B cell (primary cell): ENCODE measurements at regions of chr17 and their contacts with region 1.

Region 1: DNA sequence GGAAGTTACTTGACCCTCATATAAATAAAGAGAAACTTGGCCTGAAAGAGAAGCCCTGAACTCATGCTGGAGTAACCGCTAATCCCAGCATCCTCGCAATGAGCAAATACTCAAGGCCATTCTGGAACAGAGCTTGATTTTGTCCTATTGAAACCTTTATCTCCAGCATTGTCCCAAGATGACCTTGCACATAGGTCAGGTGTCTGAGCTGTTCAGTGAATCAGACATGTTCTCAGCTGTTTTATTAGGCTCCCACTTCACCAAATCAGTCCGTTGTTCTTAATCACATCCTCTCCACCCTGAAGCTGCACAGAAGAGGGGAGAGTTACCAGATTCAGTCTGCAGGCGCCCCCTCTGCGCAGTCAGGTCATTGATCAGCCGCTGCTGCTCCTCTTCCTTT is 9.1 kb upstream of the MYH1 start:
- DNase-seq: no peak
- ATAC-seq: no peak
- H3K4me3 ChIP-seq: no peak overlapping the region
- H3K4me3 Mint-ChIP-seq: no peak overlapping the region
- H3K27ac ChIP-seq: no peak overlapping the region
- H3K27ac Mint-ChIP-seq: no peak overlapping the region
- H3K4me1 ChIP-seq: no peaks in the 10 kb centered on the region
- H3K4me1 Mint-ChIP-seq: no peaks in the 10 kb centered on the region
- H3K27me3 ChIP-seq: peaks cover 0 to 3% (median 0%) of the 10 kb centered on the region in 4 experiments
- H3K27me3 Mint-ChIP-seq: peaks cover 9% of the 10 kb centered on the region
- CTCF ChIP-seq: no peak

Region 2: DNA sequence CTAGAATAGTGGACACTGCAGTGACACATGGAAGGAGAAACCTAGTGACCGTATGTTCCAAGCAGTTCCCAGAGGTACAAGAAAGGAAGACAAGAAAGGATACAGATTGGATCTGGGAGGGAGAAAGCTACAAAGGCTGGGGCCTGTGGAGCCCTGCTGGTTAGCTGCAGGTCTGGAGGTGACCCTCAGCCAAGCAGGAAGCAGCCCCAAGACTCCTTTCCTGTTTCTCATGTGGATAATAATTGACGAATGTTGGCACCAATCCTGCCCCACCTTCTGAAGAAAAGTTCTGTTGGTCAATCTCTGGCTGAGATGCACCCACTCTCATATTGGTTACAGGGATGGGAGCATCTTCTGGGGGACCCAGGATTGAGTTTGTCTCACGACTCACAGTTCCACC is 813.4 kb after region 1 on chr17:
- CTCF ChIA-PET with region 1: no interaction called
- POLR2A ChIA-PET with region 1: no interaction called
- intact Hi-C with region 1: loop called (anchors 10 kb)
- DNase-seq: no peak
- ATAC-seq: no peak
- H3K4me3 ChIP-seq: no peak overlapping the region
- H3K4me3 Mint-ChIP-seq: no peak overlapping the region
- H3K27ac ChIP-seq: no peak overlapping the region
- H3K27ac Mint-ChIP-seq: no peak overlapping the region
- H3K4me1 ChIP-seq: no peaks in the 10 kb centered on the region
- H3K4me1 Mint-ChIP-seq: no peaks in the 10 kb centered on the region
- H3K27me3 ChIP-seq: no peaks in the 10 kb centered on the region
- H3K27me3 Mint-ChIP-seq: no peaks in the 10 kb centered on the region
- CTCF ChIP-seq: no peak